Sigmoid colon (tissue), 7 donors: ENCODE measurements at regions of chr19 and their contacts with region 1.

Region 1: GRCh38 chr19:7903244-7904073 is at the start of gene MAP2K7:
- DNase-seq: peak; percentile 100
- H3K4me3 ChIP-seq: peak within 1 kb of the TSS; percentile 82 to 99 (median 95)
- H3K27ac ChIP-seq: peak within 1 kb of the TSS; percentile 86 to 91 (median 90)
- H3K4me1 ChIP-seq: peaks cover 0 to 47% (median 44%) of the 10 kb centered on the region in 4 donors
- H3K27me3 ChIP-seq: no peaks in the 10 kb centered on the region
- CTCF ChIP-seq: peak in 3 of 4 experiments; percentile 12 to 21 (median 20)
- EP300 ChIP-seq: peak in 1 of 4 donors; percentile 73
- POLR2A ChIP-seq: peak; percentile 15 to 65
- total RNA-seq, gene MAP2K7: 12.5 to 20.2 (median 17.4) TPM

Region 2: DNA sequence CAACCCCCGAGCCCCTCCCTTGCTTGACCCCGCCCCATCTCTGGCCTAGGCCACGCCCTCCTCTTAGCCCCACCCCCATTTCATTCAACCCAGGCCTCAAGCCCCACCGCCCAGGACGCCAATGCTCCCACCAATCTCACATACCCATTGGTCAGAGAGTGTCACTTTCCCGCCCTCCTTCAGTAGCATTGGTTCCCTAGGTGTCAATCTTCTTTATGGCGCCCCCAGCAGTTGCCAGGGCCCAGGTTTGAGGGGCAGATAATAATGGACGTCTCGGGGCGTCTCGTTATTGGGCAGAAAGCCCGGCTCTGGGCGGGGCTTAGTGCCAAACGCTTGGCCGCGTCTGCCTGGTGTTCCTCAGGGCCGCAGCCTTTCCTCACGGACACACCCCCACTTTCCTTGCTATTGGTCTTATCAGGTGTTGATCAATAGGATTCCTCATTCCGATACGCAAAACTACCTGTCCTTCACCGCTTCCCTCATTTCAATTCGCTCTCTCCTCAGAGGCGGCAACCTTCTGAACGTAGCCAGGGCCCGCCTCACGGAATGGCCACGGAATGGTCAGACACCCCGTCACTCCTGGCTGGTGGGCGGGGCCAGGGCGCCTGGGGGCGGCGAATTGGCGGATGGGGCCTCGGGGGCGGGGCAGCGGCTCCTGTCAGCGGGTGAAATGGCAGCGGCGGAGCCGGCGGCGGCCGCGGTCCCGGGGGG is 73.7 kb before region 1 on chr19 and contains the start of gene EVI5L:
- intact Hi-C with region 1: loop called (anchors 1 kb)
- DNase-seq: peak; percentile 99
- H3K4me3 ChIP-seq: peak within 1 kb of the TSS; percentile 70 to 100 (median 90)
- H3K27ac ChIP-seq: peak within 1 kb of the TSS in 3 of 4 donors; percentile 51 to 58 (median 55)
- H3K4me1 ChIP-seq: peaks cover 0 to 39% (median 32%) of the 10 kb centered on the region in 4 donors
- H3K27me3 ChIP-seq: peaks cover 0 to 4% (median 0%) of the 10 kb centered on the region in 3 donors
- CTCF ChIP-seq: no peak
- EP300 ChIP-seq: no peak
- POLR2A ChIP-seq: no peak
- total RNA-seq, gene EVI5L: 8.4 to 18.6 (median 12.5) TPM

Region 3: GRCh38 chr19:7852851-7853769 is 50.3 kb before region 1 on chr19:
- intact Hi-C with region 1: loop called (anchors 1 kb)
- DNase-seq: no peak
- H3K4me3 ChIP-seq: no peak overlapping the region
- H3K27ac ChIP-seq: peak overlapping the region in 2 of 4 donors; percentile 12 to 19
- H3K4me1 ChIP-seq: peaks cover 0 to 9% (median 7%) of the 10 kb centered on the region in 4 donors
- H3K27me3 ChIP-seq: peaks cover 0 to 48% (median 17%) of the 10 kb centered on the region in 3 donors
- CTCF ChIP-seq: peak; percentile 44 to 86 (median 60)
- EP300 ChIP-seq: no peak
- POLR2A ChIP-seq: no peak

Region 4: GRCh38 chr19:7868676-7869452 is 34.6 kb before region 1 on chr19:
- intact Hi-C with region 1: loop called (anchors 5 kb)
- DNase-seq: no peak
- H3K4me3 ChIP-seq: peak overlapping the region in 3 of 4 donors; percentile 29 to 46 (median 42)
- H3K27ac ChIP-seq: peak overlapping the region; percentile 33 to 72 (median 46)
- H3K4me1 ChIP-seq: peaks cover 0 to 46% (median 40%) of the 10 kb centered on the region in 4 donors
- H3K27me3 ChIP-seq: peaks cover 29 to 68% (median 54%) of the 10 kb centered on the region in 3 donors
- CTCF ChIP-seq: peak in 1 of 4 experiments; percentile 86
- EP300 ChIP-seq: no peak
- POLR2A ChIP-seq: no peak

Region 5: GRCh38 chr19:7879836-7880235 is 23.6 kb before region 1 on chr19:
- intact Hi-C with region 1: no loop called
- DNase-seq: no peak
- H3K4me3 ChIP-seq: no peak overlapping the region
- H3K27ac ChIP-seq: no peak overlapping the region
- H3K4me1 ChIP-seq: no peaks in the 10 kb centered on the region
- H3K27me3 ChIP-seq: peaks cover 0 to 15% (median 13%) of the 10 kb centered on the region in 3 donors
- CTCF ChIP-seq: no peak
- EP300 ChIP-seq: no peak
- POLR2A ChIP-seq: no peak

Region 6: GRCh38 chr19:7919610-7920518 is 16.4 kb after region 1 on chr19 and contains the start of gene SNAPC2:
- intact Hi-C with region 1: loop called (anchors 2 kb)
- DNase-seq: peak; percentile 98
- H3K4me3 ChIP-seq: peak within 1 kb of the TSS; percentile 70 to 87 (median 74)
- H3K27ac ChIP-seq: peak within 1 kb of the TSS; percentile 93 to 98 (median 96)
- H3K4me1 ChIP-seq: peaks cover 0 to 83% (median 81%) of the 10 kb centered on the region in 4 donors
- H3K27me3 ChIP-seq: peaks cover 38 to 47% (median 44%) of the 10 kb centered on the region in 3 donors
- CTCF ChIP-seq: no peak
- EP300 ChIP-seq: peak in 1 of 4 donors; percentile 64
- POLR2A ChIP-seq: peak; percentile 22 to 59
- total RNA-seq, gene SNAPC2: 20.3 to 31.2 (median 27.8) TPM

Region 7: DNA sequence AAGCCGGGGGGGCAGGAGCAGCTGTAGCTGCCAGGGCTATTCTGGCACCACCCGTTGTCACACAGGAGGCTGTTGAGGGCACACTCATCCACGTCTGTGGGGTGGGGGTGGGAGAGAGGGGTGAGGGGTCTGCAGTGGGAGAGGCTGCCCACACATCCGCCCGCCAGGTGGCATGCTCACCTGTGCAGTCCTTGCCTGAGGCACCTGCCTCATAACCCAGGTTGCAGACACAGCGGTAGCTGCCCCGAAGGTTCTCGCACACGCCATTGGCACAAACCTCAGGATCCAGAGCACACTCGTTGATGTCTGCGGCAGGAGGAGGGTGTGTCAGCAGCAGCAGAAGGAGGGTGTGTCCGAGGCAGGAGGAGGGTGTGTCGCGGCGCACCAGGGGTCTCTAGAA is 225.6 kb after region 1 on chr19:
- intact Hi-C with region 1: no loop called
- DNase-seq: no peak
- H3K4me3 ChIP-seq: no peak overlapping the region
- H3K27ac ChIP-seq: no peak overlapping the region
- H3K4me1 ChIP-seq: no peaks in the 10 kb centered on the region
- H3K27me3 ChIP-seq: no peaks in the 10 kb centered on the region
- CTCF ChIP-seq: no peak
- EP300 ChIP-seq: no peak
- POLR2A ChIP-seq: no peak